Endothelial cell of umbilical vein (primary cell): ENCODE measurements at regions of chr4 and their contacts with region 1.

Region 1: GRCh38 chr4:102826890-102827673 is at the start of gene UBE2D3:
- DNase-seq: peak; percentile 92
- H3K4me3 ChIP-seq: peak within 1 kb of the TSS; percentile 82 to 97 (median 89)
- H3K27ac ChIP-seq: peak within 1 kb of the TSS; percentile 98
- H3K4me1 ChIP-seq: peaks cover 32% of the 10 kb centered on the region
- H3K27me3 ChIP-seq: no peaks in the 10 kb centered on the region
- CTCF ChIP-seq: peak in 1 of 2 donors; percentile 15
- POLR2A ChIP-seq: peak; percentile 86
- total RNA-seq, gene UBE2D3: 279 and 288 TPM in 2 replicates

Region 2: DNA sequence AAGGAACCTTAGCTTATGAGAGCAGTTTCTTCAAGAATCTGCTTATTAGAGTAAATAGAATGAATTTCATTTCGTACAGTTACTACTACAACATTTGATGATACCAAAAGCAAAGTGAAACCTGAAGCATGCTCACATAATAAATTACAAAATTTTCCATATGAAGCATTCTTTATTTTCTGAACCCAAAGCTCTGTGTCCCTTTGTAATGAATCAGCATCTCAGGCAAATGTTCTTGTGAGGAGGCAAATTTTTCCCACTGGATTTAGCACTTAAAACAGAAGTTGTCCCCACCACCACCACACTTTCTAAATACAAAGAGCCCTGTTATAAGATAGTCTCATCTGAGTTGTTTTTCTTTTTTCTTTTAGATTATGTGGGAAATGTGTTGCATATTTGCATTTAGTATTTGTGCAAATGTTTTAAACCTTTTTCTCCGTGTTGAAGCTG is 396.6 kb before region 1 on chr4:
- CTCF ChIA-PET with region 1: interaction called, 5 read pairs
- POLR2A ChIA-PET with region 1: interaction called, 5 read pairs
- dilution Hi-C with region 1: no loop called
- intact Hi-C with region 1: loop called (anchors 1 kb)
- DNase-seq: peak; percentile 50
- H3K4me3 ChIP-seq: peak overlapping the region; percentile 49 to 97 (median 97)
- H3K27ac ChIP-seq: peak overlapping the region; percentile 84
- H3K4me1 ChIP-seq: peaks cover 4% of the 10 kb centered on the region
- H3K27me3 ChIP-seq: no peaks in the 10 kb centered on the region
- CTCF ChIP-seq: no peak
- POLR2A ChIP-seq: no peak

Region 3: DNA sequence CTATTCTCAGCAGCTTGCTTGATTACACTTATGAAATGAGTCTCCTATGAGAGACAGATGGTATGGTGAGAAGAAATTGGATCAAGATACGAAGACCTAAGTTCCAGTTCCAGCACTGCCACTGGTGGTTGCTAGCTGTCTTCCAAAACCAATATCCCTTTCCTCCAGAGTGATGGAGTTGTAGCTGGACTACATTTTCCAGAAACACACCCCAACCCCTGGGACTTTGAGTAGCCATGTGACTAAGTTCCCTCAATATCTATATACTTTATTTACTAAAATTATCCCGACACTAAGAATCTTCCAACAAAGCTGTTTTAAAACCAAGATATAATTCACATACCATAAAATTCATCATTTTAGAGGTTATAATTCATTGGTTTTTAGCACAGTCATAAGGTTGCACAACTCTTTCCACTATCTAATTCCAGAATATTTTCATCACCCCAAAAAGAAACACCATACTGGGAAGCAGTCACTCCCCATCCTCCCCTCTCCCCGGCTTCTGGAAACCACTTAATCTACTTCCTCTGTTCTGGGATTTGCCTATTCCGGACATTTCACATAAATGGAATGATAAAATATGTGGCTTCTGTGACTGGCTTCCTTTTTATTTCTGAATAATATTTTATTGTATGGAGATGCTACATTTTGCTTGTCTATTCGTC is 184.3 kb before region 1 on chr4:
- CTCF ChIA-PET with region 1: no interaction called
- POLR2A ChIA-PET with region 1: no interaction called
- dilution Hi-C with region 1: no loop called
- intact Hi-C with region 1: loop called (anchors 5 kb)
- DNase-seq: no peak
- H3K4me3 ChIP-seq: no peak overlapping the region
- H3K27ac ChIP-seq: no peak overlapping the region
- H3K4me1 ChIP-seq: peaks cover 12% of the 10 kb centered on the region
- H3K27me3 ChIP-seq: no peaks in the 10 kb centered on the region
- CTCF ChIP-seq: no peak
- POLR2A ChIP-seq: no peak

Region 4: GRCh38 chr4:102684610-102685052 is 142.5 kb before region 1 on chr4:
- CTCF ChIA-PET with region 1: no interaction called
- POLR2A ChIA-PET with region 1: no interaction called
- dilution Hi-C with region 1: no loop called
- intact Hi-C with region 1: no loop called
- DNase-seq: no peak
- H3K4me3 ChIP-seq: no peak overlapping the region
- H3K27ac ChIP-seq: no peak overlapping the region
- H3K4me1 ChIP-seq: no peaks in the 10 kb centered on the region
- H3K27me3 ChIP-seq: no peaks in the 10 kb centered on the region
- CTCF ChIP-seq: no peak
- POLR2A ChIP-seq: no peak

Region 5: DNA sequence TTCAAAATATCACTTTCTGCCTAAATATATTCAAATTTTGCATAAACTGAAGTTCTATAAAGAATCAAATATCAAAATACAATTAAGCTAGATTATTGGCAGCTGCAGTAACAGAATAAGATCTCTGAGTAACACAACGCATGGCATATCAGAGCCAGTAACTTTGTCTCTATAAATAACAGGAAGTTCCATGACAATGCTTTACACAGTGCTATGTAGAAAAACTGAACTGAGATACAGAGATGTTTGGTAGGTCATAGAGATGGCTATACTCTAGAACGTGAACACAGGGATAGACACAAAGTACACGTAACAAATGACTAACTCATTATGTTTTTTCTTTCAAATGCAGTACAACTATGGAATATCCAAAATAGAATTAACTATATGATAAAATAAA is 17.9 kb before region 1 on chr4:
- CTCF ChIA-PET with region 1: interaction called, 5 read pairs
- POLR2A ChIA-PET with region 1: interaction called, 16 read pairs
- dilution Hi-C with region 1: no loop called
- intact Hi-C with region 1: loop called (anchors 1 kb)
- DNase-seq: peak; percentile 66
- H3K4me3 ChIP-seq: no peak overlapping the region
- H3K27ac ChIP-seq: peak overlapping the region; percentile 5
- H3K4me1 ChIP-seq: peaks cover 25% of the 10 kb centered on the region
- H3K27me3 ChIP-seq: no peaks in the 10 kb centered on the region
- CTCF ChIP-seq: no peak
- POLR2A ChIP-seq: no peak

Region 6: DNA sequence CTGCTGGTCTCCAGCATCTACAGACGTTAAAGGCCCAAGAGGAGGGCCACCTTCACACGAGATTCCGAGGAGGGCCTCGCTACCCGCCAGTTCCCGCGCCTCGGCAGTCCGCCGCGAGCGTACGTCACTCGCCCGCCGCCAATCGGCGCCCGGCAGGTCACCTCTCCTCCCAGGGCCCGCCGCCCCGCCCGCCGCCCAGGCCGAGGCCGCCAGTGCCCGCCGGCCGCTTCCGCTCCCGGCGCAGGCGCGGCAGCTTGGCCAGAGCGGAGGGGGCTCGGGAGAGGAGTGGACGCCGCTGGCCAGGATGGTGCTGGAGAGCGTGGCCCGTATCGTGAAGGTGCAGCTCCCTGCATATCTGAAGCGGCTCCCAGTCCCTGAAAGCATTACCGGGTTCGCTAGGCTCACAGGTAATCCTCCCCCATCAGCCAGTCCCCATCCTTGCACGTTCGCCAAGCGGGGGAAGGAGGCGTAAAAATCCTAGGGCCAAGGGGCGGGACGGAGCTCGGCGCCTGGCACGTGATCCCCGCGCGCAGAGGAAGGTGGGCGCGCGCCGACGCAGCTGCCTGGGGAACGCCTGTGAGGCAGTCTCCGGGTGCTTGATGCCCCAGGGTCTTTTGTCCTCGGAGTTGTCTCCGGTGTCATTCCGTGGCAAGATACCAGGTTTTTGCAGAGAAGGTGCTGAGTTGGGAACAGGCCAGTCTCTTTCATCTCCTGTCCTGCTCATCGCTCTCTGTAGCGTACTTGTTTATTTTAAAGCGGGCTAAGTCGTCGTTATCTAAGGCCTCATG is 41.9 kb after region 1 on chr4 and contains the start of gene CISD2:
- CTCF ChIA-PET with region 1: interaction called, 8 read pairs
- POLR2A ChIA-PET with region 1: interaction called, 35 read pairs
- dilution Hi-C with region 1: no loop called
- intact Hi-C with region 1: loop called (anchors 1 kb)
- DNase-seq: peak; percentile 94
- H3K4me3 ChIP-seq: peak within 1 kb of the TSS; percentile 43 to 88 (median 78)
- H3K27ac ChIP-seq: peak within 1 kb of the TSS; percentile 76
- H3K4me1 ChIP-seq: peaks cover 25% of the 10 kb centered on the region
- H3K27me3 ChIP-seq: no peaks in the 10 kb centered on the region
- CTCF ChIP-seq: no peak
- POLR2A ChIP-seq: peak; percentile 91
- total RNA-seq, gene CISD2: 26.5 and 28.4 TPM in 2 replicates

Region 7: GRCh38 chr4:103099691-103100392 is 272.8 kb after region 1 on chr4 and contains the start of gene BDH2:
- CTCF ChIA-PET with region 1: no interaction called
- POLR2A ChIA-PET with region 1: no interaction called
- dilution Hi-C with region 1: no loop called
- intact Hi-C with region 1: loop called (anchors 2 kb)
- DNase-seq: peak; percentile 93
- H3K4me3 ChIP-seq: peak within 1 kb of the TSS; percentile 21 to 82 (median 48)
- H3K27ac ChIP-seq: peak within 1 kb of the TSS; percentile 49
- H3K4me1 ChIP-seq: peaks cover 8% of the 10 kb centered on the region
- H3K27me3 ChIP-seq: no peaks in the 10 kb centered on the region
- CTCF ChIP-seq: peak; percentile 53 to 59
- POLR2A ChIP-seq: no peak
- total RNA-seq, gene BDH2: 29.4 and 36.4 TPM in 2 replicates